H1 (cell line): ENCODE measurements at regions of chr6 and their contacts with region 1.

Region 1: GRCh38 chr6:110873981-110874879 is at the start of gene AMD1:
- DNase-seq: peak; percentile 87 to 93
- H3K4me3 ChIP-seq: peak within 1 kb of the TSS; percentile 81 to 95 (median 90)
- H3K27ac ChIP-seq: peak within 1 kb of the TSS; percentile 91
- H3K4me1 ChIP-seq: peaks cover 0 to 4% (median 0%) of the 10 kb centered on the region in 4 experiments; a peak in 3 of 7 replicates
- H3K27me3 ChIP-seq: no peaks in the 10 kb centered on the region
- CTCF ChIP-seq: no peak
- EP300 ChIP-seq: no peak
- POLR2A ChIP-seq: peak; percentile 99 to 100
- RAD21 ChIP-seq: no peak
- total RNA-seq, gene AMD1: 174 and 177 TPM in 2 replicates

Region 2: GRCh38 chr6:110688661-110689268 is 185.5 kb before region 1 on chr6:
- CTCF ChIA-PET with region 1: interaction called, 3 read pairs
- POLR2A ChIA-PET with region 1: interaction called, 17 read pairs
- DNase-seq: no peak
- H3K4me3 ChIP-seq: no peak overlapping the region
- H3K27ac ChIP-seq: no peak overlapping the region
- H3K4me1 ChIP-seq: peaks cover 0 to 13% (median 5%) of the 10 kb centered on the region in 4 experiments; a peak in 4 of 7 replicates
- H3K27me3 ChIP-seq: no peaks in the 10 kb centered on the region
- CTCF ChIP-seq: no peak
- EP300 ChIP-seq: no peak
- POLR2A ChIP-seq: no peak
- RAD21 ChIP-seq: no peak

Region 3: GRCh38 chr6:110781522-110782214 is 92.6 kb before region 1 on chr6:
- CTCF ChIA-PET with region 1: interaction called, 4 read pairs
- POLR2A ChIA-PET with region 1: interaction called, 15 read pairs
- DNase-seq: no peak
- H3K4me3 ChIP-seq: no peak overlapping the region
- H3K27ac ChIP-seq: no peak overlapping the region
- H3K4me1 ChIP-seq: no peaks in the 10 kb centered on the region
- H3K27me3 ChIP-seq: no peaks in the 10 kb centered on the region
- CTCF ChIP-seq: no peak
- EP300 ChIP-seq: no peak
- POLR2A ChIP-seq: no peak
- RAD21 ChIP-seq: no peak

Region 4: DNA sequence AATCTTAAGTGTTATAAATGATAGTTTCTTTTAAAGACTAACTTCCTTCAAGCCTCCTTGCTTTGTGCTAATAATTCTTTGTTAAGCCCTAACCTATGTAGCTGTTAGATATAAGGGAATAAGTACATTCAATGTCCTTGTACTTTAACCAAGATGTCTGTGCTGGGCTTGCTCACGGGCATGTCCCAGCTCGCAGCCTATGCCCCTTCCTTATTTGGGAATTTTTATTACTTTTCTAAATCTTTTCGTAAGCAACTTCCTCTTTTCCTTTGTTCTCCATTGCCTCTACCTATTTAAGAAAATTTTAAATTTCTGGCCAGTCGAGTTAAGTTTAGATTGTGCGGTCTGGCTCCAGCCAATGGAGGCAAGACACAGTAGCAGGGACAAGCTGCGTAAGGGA is 33.0 kb before region 1 on chr6:
- CTCF ChIA-PET with region 1: no interaction called
- POLR2A ChIA-PET with region 1: interaction called, 10 read pairs
- DNase-seq: no peak
- H3K4me3 ChIP-seq: no peak overlapping the region
- H3K27ac ChIP-seq: no peak overlapping the region
- H3K4me1 ChIP-seq: no peaks in the 10 kb centered on the region
- H3K27me3 ChIP-seq: no peaks in the 10 kb centered on the region
- CTCF ChIP-seq: no peak
- EP300 ChIP-seq: no peak
- POLR2A ChIP-seq: no peak
- RAD21 ChIP-seq: no peak

Region 5: GRCh38 chr6:110890288-110890687 is 16.1 kb after region 1 on chr6:
- CTCF ChIA-PET with region 1: interaction called, 19 read pairs
- POLR2A ChIA-PET with region 1: interaction called, 172 read pairs
- DNase-seq: no peak
- H3K4me3 ChIP-seq: no peak overlapping the region
- H3K27ac ChIP-seq: no peak overlapping the region
- H3K4me1 ChIP-seq: peaks cover 0 to 3% (median 0%) of the 10 kb centered on the region in 4 experiments; a peak in 2 of 7 replicates
- H3K27me3 ChIP-seq: no peaks in the 10 kb centered on the region
- CTCF ChIP-seq: no peak
- EP300 ChIP-seq: no peak
- POLR2A ChIP-seq: no peak
- RAD21 ChIP-seq: no peak

Region 6: DNA sequence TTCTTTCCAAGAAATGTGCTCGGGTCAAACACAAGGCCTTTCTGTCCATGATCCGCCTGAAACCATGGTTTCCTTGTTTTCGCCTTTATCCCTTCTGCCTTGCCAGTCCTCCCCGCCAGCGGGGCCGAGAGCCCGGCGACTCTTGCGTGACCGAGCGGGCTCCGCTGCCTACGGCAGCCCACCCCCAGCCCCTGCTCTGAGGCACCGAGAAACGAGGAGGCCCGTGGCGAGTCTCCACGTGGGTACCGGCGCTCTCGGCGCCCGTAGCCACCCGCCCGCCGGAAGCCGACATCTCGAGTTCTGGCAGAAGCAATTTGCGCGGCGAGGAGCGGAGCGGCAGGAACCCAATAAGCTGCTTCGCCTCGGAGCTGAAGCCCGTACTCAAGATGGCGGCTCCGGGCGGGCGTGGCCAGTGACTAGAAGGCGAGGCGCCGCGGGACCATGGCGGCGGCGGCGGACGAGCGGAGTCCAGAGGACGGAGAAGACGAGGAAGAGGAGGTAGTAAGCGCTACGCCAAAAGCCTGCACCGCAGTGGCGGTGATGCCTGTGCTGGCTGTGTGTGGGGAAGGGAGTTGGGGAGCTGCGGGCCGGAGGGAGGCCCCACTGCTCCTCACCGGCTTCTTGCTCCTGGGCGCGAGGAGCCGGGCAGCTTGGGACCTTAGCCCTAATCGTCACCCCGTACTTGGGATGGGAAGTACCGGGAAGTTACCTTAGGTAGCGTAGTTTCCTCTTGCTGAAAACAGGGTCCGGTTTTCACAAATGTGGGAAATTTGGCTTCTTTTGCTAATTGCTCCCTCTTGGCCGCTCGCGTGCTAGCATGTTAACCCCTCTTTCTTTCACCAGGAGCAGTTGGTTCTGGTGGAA is 84.3 kb after region 1 on chr6 and contains the start of gene GTF3C6:
- CTCF ChIA-PET with region 1: no interaction called
- POLR2A ChIA-PET with region 1: interaction called, 90 read pairs
- DNase-seq: peak; percentile 81 to 92
- H3K4me3 ChIP-seq: peak within 1 kb of the TSS; percentile 74 to 96 (median 92)
- H3K27ac ChIP-seq: peak within 1 kb of the TSS; percentile 95
- H3K4me1 ChIP-seq: peaks cover 0 to 3% (median 1%) of the 10 kb centered on the region in 4 experiments; a peak in 1 of 7 replicates
- H3K27me3 ChIP-seq: no peaks in the 10 kb centered on the region
- CTCF ChIP-seq: no peak
- EP300 ChIP-seq: no peak
- POLR2A ChIP-seq: peak; percentile 94 to 95
- RAD21 ChIP-seq: no peak; a peak in 1 of 4 replicates
- total RNA-seq, gene GTF3C6: 87.4 and 93.9 TPM in 2 replicates

Region 7: DNA sequence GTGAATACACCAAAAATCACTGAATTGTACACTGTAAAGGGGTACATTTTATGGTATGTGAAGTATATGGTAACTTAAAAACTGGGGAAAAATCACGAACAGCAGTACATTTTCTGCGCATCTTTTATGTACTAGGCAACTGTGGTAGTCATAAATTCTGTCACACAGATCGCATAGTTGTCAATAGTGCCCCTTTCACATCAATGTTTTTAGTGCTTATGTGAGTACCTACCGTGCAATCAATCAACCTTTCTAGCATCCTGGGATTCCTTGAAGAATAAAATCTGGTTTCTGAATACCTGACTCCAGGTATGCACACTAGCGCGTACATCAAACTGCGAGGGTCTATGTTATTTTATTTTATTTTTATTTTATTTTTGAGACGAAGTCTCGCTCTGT is 107.0 kb after region 1 on chr6:
- CTCF ChIA-PET with region 1: no interaction called
- POLR2A ChIA-PET with region 1: interaction called, 17 read pairs
- DNase-seq: no peak
- H3K4me3 ChIP-seq: peak overlapping the region; percentile 75 to 96 (median 94)
- H3K27ac ChIP-seq: no peak overlapping the region
- H3K4me1 ChIP-seq: no peaks in the 10 kb centered on the region
- H3K27me3 ChIP-seq: no peaks in the 10 kb centered on the region
- CTCF ChIP-seq: no peak
- EP300 ChIP-seq: no peak
- POLR2A ChIP-seq: no peak
- RAD21 ChIP-seq: no peak

Region 8: DNA sequence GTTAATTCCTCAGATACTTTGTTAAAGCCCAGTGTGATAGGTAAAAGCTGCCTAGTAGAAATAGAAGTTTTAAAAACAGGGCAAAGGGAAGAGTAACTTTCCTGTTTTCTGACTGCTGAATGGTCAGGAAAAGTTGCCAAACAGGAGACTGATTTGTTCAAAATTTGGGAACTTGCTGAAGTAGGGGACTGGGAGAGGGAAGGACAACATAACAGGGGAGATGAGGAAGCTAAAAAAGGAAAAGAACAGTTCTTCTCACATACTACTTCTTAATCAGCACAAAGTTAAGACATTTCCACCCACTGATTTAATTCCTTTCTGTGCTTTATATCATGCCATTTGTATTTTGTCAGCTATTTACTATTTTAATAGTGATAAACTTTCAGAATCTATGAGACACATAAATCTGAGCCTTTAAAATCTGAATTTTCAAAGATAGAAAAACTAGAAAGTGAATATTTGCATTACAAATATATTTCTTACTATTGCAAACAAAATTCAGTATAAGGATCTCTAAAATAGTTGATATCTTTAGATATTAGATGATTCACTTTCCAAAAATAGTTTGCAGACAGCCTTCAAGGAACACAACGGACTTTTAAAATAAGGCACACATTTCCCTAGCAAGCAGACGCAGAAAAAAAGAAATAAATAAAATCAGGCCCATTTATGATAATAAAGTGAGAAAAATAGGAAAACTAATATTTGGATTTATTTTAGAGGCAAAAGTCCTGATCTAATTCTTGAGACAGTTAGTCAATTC is 176.2 kb after region 1 on chr6:
- CTCF ChIA-PET with region 1: no interaction called
- POLR2A ChIA-PET with region 1: no interaction called
- DNase-seq: no peak
- H3K4me3 ChIP-seq: no peak overlapping the region
- H3K27ac ChIP-seq: no peak overlapping the region
- H3K4me1 ChIP-seq: no peaks in the 10 kb centered on the region
- H3K27me3 ChIP-seq: no peaks in the 10 kb centered on the region; a peak in 1 of 7 replicates
- CTCF ChIP-seq: no peak
- EP300 ChIP-seq: no peak
- POLR2A ChIP-seq: no peak
- RAD21 ChIP-seq: no peak